ENCODE measurements at regions of chr17 and their contacts with region 1.

Region 1: DNA sequence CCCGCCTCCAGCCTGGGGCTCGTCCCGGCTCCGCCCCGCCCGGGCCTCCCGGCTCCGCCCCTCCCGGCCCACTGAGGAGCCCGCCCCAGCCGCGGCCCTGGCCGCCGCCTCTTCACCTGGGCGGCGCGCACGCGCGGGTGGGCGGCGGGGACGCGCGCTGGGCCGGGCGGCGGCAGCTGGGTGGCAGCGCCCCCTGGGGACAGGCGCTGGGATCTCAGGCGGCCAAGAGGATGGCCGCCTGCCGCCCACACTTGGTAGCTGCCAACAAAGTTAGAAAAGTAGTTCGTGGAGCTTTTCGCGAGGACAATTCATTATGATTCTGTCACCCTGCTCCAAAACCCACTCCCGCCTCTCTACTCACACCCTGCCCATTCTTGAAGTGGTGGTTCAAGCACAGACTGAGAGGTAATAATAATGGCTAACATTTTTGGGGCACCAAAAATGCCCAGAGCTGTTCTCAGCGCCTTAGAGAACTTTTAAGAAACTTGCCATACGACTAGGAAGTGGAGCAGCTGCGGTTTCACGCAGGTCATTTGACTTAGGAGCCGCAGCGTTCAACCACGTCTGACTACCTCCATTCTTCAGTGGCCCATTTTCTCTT is 340 bp upstream of the MYO1D start:
- DNase-seq: peak; percentile 92 to 96 (median 93)
- H3K4me3 ChIP-seq: peak overlapping the region; percentile 88
- H3K27ac ChIP-seq: peak overlapping the region; percentile 95 to 96
- H3K4me1 ChIP-seq: peaks cover 2% of the 10 kb centered on the region
- H3K27me3 ChIP-seq: no peaks in the 10 kb centered on the region
- CTCF ChIP-seq: peak; percentile 71 to 99 (median 98)
- EP300 ChIP-seq: no peak
- POLR2A ChIP-seq: no peak

Region 2: DNA sequence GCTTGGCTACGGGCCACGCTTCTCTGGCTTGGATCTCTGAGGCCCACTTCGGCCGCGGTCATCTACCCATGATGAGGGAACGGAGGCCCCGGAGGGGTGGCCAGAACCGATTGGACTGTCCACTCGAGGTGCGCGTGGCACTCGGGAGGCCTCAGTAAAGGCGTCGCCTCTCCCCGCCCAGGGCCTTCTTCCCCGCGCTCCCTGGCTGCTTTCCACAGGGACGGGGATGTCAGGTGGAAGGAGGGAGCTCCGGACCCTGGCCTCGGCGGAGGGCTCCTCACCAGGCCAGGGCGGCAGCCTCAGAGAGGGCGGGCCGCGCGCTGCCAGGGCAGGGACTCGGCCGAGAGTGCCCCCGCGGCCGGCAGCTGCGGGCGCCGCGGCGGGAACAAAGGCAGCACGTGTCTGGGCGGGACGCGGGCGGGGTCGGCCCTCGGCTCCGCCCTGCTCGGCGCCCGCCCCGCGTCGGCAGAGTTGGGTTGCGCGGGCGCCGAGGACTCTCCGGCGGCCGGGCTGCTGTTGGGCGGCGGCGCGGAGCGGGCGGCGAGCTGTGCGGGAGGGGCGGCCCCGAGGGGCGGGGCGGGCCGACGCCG is 391.1 kb before region 1 on chr17:
- intact Hi-C with region 1: loop called in 1 of 4 experiments (anchors 5 kb)
- DNase-seq: peak; percentile 73 to 86 (median 81)
- H3K4me3 ChIP-seq: peak overlapping the region; percentile 41
- H3K27ac ChIP-seq: peak overlapping the region; percentile 62 to 95
- H3K4me1 ChIP-seq: peaks cover 12% of the 10 kb centered on the region
- H3K27me3 ChIP-seq: no peaks in the 10 kb centered on the region
- CTCF ChIP-seq: no peak
- EP300 ChIP-seq: no peak
- POLR2A ChIP-seq: peak; percentile 41

Region 3: DNA sequence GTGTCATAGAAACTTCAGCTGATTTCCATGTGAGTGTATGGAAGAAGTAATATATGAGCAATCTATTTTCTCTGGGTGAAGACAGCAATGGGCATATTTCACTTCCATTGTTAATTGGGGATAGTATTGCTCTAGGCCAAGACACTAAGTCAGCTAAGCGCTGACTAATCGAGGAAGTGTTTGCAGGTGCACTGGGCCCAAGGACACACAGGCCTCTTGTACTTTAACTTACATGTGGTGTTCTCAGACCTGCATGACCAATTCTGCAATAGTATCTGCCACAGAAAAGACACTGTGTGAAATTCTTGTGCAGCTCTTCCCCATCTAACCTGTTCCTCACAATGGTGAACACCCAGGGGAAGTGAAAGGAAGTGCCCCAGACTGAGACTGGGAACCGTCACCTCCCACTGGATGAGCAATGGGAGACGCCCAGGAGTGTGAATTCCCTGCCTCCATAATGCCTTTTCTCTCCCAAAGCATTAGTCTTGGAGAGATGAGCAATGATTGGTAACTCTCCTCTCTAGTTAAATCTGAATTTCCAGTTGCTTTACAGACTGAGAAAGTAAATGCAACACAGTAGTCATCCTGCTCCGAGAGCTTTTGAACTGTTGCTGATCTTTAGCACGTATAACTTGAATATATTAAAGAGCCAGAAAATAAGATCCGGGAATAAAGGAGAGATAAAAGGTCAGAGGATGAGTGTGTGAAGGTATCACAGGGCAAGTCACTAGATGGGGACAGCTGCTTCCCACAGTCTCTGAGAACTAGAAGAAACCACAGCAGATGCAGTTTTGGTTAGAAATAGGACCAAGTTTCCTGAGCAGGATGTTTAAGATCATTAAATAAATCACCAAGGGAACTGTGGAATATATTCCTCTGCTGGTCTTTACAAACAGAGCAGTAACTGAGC is 307.8 kb before region 1 on chr17:
- intact Hi-C with region 1: no loop called
- DNase-seq: no peak
- H3K4me3 ChIP-seq: no peak overlapping the region
- H3K27ac ChIP-seq: no peak overlapping the region
- H3K4me1 ChIP-seq: no peaks in the 10 kb centered on the region
- H3K27me3 ChIP-seq: no peaks in the 10 kb centered on the region
- CTCF ChIP-seq: no peak
- EP300 ChIP-seq: no peak
- POLR2A ChIP-seq: no peak

Region 4: DNA sequence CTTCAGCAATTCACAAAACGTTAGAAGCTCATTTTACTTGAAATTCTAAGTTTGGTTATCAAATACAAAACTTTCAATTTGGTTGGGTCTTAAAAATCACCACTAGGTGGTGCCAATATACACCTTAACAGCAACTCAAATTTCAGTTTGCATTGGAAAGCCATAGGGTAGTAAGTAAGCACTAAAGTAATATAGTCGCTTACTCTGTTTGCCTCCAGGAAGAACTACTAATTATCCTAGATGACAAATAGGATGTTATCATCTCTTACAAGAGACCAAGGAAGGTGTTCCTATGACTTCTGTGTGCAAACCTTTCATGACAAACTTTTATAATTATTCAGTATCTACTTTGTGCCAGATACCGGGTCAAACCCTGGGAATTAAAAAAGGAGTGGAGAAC is 93.7 kb before region 1 on chr17:
- intact Hi-C with region 1: loop called (anchors 2 to 5 kb)
- DNase-seq: no peak
- H3K4me3 ChIP-seq: no peak overlapping the region
- H3K27ac ChIP-seq: no peak overlapping the region
- H3K4me1 ChIP-seq: no peaks in the 10 kb centered on the region
- H3K27me3 ChIP-seq: no peaks in the 10 kb centered on the region
- CTCF ChIP-seq: peak; percentile 70 to 91 (median 81)
- EP300 ChIP-seq: no peak
- POLR2A ChIP-seq: no peak

Region 5: GRCh38 chr17:32828822-32829221 is 48.4 kb before region 1 on chr17:
- intact Hi-C with region 1: loop called in 1 of 4 experiments (anchors 10 kb)
- DNase-seq: no peak
- H3K4me3 ChIP-seq: no peak overlapping the region
- H3K27ac ChIP-seq: no peak overlapping the region
- H3K4me1 ChIP-seq: no peaks in the 10 kb centered on the region
- H3K27me3 ChIP-seq: no peaks in the 10 kb centered on the region
- CTCF ChIP-seq: no peak
- EP300 ChIP-seq: no peak
- POLR2A ChIP-seq: no peak

Region 6: GRCh38 chr17:32971171-32971570 is 93.9 kb after region 1 on chr17:
- intact Hi-C with region 1: no loop called
- DNase-seq: no peak
- H3K4me3 ChIP-seq: no peak overlapping the region
- H3K27ac ChIP-seq: no peak overlapping the region
- H3K4me1 ChIP-seq: no peaks in the 10 kb centered on the region
- H3K27me3 ChIP-seq: no peaks in the 10 kb centered on the region
- CTCF ChIP-seq: no peak
- EP300 ChIP-seq: no peak
- POLR2A ChIP-seq: no peak

Region 7: GRCh38 chr17:32997753-32998632 is 120.7 kb after region 1 on chr17:
- intact Hi-C with region 1: loop called in 1 of 4 experiments (anchors 10 kb)
- DNase-seq: peak; percentile 80 to 89 (median 85)
- H3K4me3 ChIP-seq: no peak overlapping the region
- H3K27ac ChIP-seq: no peak overlapping the region
- H3K4me1 ChIP-seq: peaks cover 4% of the 10 kb centered on the region
- H3K27me3 ChIP-seq: no peaks in the 10 kb centered on the region
- CTCF ChIP-seq: peak; percentile 66 to 82 (median 68)
- EP300 ChIP-seq: no peak
- POLR2A ChIP-seq: no peak

Region 8: GRCh38 chr17:33038740-33039139 is 161.5 kb after region 1 on chr17:
- intact Hi-C with region 1: no loop called
- DNase-seq: peak in 3 of 5 donors; percentile 26 to 45 (median 35)
- H3K4me3 ChIP-seq: no peak overlapping the region
- H3K27ac ChIP-seq: no peak overlapping the region
- H3K4me1 ChIP-seq: no peaks in the 10 kb centered on the region
- H3K27me3 ChIP-seq: no peaks in the 10 kb centered on the region
- CTCF ChIP-seq: no peak
- EP300 ChIP-seq: no peak
- POLR2A ChIP-seq: no peak

Measured in ovary (tissue), 10 donors.